PC-9 (cell line): ENCODE measurements at regions of chr20 and their contacts with region 1.

Region 1: DNA sequence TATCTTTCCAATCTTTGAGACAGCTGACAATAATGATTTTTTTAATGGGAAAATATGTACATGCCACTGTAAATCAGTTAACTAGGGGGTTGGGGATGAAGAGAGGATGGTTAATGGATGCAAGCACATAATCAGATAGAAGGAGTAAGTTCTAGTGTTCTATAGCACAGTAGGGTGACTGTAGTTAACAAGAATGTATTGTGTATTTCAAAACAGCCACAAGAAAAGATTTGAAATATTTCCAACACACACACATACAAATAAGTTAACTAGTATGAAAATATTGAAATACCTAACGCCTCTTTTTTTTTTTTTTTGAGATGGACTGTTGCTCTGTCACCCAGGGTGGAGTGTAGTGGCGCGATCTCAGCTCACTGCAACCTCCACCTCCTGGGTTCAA is 153.4 kb upstream of the SALL4 start:
- DNase-seq: no peak
- H3K4me3 ChIP-seq: no peak overlapping the region
- H3K27ac ChIP-seq: no peak overlapping the region
- H3K4me1 ChIP-seq: no peaks in the 10 kb centered on the region
- H3K27me3 ChIP-seq: no peaks in the 10 kb centered on the region
- CTCF ChIP-seq: no peak

Region 2: GRCh38 chr20:51934301-51935002 is 21.3 kb before region 1 on chr20:
- CTCF ChIA-PET with region 1: no interaction called
- POLR2A ChIA-PET with region 1: interaction called, 10 read pairs
- intact Hi-C with region 1: no loop called
- DNase-seq: no peak
- H3K4me3 ChIP-seq: no peak overlapping the region
- H3K27ac ChIP-seq: no peak overlapping the region
- H3K4me1 ChIP-seq: peaks cover 11% of the 10 kb centered on the region
- H3K27me3 ChIP-seq: no peaks in the 10 kb centered on the region
- CTCF ChIP-seq: no peak

Region 3: DNA sequence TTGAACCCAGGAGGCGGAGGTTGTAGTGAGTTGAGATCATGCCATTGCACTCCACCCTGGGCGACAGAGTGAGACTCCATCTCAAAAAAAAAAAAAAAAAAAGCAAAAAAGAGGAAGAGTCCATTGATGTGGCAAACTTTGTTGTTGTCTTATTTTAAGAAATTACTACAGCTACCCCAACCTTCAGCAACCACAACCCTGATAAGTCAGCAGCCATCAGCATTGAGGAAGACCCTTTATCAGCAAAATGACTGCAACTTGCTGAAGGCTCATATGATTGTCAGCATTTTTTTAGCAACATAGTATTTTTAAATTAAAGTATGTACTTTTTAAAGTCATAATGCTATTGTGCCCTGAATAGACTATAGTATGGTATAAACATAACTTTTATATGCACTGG is 187.0 kb after region 1 on chr20:
- CTCF ChIA-PET with region 1: no interaction called
- POLR2A ChIA-PET with region 1: no interaction called
- intact Hi-C with region 1: no loop called
- DNase-seq: no peak
- H3K4me3 ChIP-seq: no peak overlapping the region
- H3K27ac ChIP-seq: no peak overlapping the region
- H3K4me1 ChIP-seq: no peaks in the 10 kb centered on the region
- H3K27me3 ChIP-seq: no peaks in the 10 kb centered on the region
- CTCF ChIP-seq: no peak